Activated CD4-positive, alpha-beta T cell treated with anti-CD3 and anti-CD28 coated beads, Interleukin-2, amount 10 ng/mL, durations not matched to agents 24 days and 14 days (primary cell): ENCODE measurements at regions of chr2 and their contacts with region 1.

Region 1: DNA sequence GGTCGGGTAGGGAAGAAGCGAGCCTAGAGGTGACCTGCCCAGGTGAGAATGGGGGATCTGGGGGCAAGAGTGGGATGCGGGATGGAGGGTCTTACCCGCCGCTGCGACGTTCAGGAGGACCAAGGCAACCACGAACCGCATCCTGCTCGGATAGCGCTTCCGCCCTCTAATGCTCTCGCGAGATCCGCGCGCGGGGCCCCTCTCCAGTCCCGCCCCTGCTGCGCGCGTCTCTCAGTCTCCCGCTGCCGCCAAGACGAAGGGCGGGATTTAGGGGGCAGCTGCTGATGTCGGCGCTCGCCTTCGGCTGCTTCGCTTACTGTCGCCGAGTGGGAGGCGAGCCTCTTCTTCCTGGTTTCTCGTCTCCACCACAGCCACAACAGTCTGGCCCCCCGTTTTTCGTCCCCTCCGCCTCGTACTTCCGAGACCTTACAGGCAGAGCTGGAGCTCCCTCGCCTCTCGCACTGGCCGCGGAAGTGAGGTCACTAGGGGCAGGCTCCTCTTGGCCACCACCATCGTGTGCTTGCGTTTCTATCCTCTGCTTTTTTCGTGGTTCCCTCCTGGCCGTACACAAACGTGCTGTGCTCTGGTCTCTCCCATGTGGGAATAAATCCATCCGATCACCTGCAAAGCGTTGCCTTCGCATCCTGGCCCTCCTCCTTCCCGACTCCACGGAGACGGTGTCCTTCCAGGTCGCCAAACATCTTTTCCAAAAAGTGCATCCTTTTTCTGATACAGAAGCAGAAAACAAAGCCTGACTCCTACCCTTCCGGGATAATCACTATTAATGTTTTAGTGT is at the start of gene TGOLN2:
- DNase-seq: peak; percentile 98
- H3K4me3 Mint-ChIP-seq: peak within 1 kb of the TSS; percentile 95
- H3K27ac Mint-ChIP-seq: peak within 1 kb of the TSS; percentile 99
- H3K4me1 Mint-ChIP-seq: peaks cover 31% of the 10 kb centered on the region
- H3K27me3 Mint-ChIP-seq: no peaks in the 10 kb centered on the region
- total RNA-seq, gene TGOLN2: 89.6 and 94.1 TPM in 2 replicates

Region 2: GRCh38 chr2:84459018-84459943 is 868.7 kb before region 1 on chr2 and contains the start of gene SUCLG1:
- intact Hi-C with region 1: loop called (anchors 2 kb)
- DNase-seq: peak; percentile 96
- H3K4me3 Mint-ChIP-seq: peak within 1 kb of the TSS; percentile 94
- H3K27ac Mint-ChIP-seq: peak within 1 kb of the TSS; percentile 97
- H3K4me1 Mint-ChIP-seq: peaks cover 33% of the 10 kb centered on the region
- H3K27me3 Mint-ChIP-seq: no peaks in the 10 kb centered on the region
- total RNA-seq, gene SUCLG1: 71.9 and 72.6 TPM in 2 replicates

Region 3: GRCh38 chr2:85354286-85355072 is 26.5 kb after region 1 on chr2 and contains the starts of genes ELMOD3 and RETSAT:
- intact Hi-C with region 1: loop called (anchors 1 kb)
- DNase-seq: peak; percentile 99
- H3K4me3 Mint-ChIP-seq: peak within 1 kb of the TSS; percentile 94
- H3K27ac Mint-ChIP-seq: peak within 1 kb of the TSS; percentile 94
- H3K4me1 Mint-ChIP-seq: peaks cover 26% of the 10 kb centered on the region
- H3K27me3 Mint-ChIP-seq: no peaks in the 10 kb centered on the region
- total RNA-seq, gene ELMOD3: 16.7 and 18.2 TPM in 2 replicates
- total RNA-seq, gene RETSAT: 21.0 and 25.0 TPM in 2 replicates